ENCODE measurements at regions of chr11 and their contacts with region 1.

Region 1: GRCh38 chr11:134261626-134262488 is 8.5 kb downstream of the ACAD8 start:
- DNase-seq: no peak

Region 2: DNA sequence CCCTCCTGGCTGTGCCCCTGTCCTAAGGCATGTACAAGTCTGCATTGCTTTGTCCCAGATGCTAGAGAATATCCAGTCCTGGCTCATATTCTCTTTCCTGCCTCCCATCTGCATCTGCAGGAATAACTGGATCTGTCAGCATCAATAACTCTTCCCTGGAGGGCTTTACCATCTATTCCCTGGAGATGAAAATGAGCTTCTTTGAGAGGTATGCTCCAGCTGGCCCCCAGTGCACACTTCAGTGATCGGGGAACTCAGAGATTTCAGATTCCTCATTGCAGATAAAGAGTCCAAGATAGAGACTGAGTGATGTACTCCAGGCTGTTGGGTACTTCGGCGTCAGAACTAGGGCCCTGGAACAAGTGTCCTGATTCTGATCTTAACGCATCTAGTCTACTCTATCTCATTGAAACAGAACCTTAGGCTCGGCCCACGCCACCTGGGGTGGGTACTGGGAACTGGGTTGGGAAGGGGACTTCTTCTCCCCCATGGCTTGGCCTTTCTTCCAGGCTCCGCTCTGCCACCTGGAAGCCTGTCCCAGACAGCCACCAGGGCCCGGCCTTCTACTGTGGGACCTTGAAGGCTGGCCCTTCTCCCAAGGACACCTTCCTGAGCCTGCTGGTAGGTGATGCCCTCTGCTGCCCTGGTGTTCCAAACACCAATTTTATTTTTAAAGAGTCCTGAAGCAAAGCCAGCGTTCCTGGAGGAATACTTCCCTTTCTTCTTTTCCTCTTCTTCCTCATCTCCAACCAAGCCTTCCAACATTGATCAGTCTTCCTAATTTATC is 52.2 kb after region 1 on chr11:
- intact Hi-C with region 1: loop called (anchors 5 kb)
- DNase-seq: no peak

Region 3: GRCh38 chr11:134532921-134533421 is 271.1 kb after region 1 on chr11:
- intact Hi-C with region 1: no loop called
- DNase-seq: peak; percentile 64